Heart right ventricle (tissue), 16 donors: ENCODE measurements at regions of chr11 and their contacts with region 1.

Region 1: GRCh38 chr11:64269380-64270234 is 14.9 kb downstream of the BAD start:
- DNase-seq: peak; percentile 97 to 99
- ATAC-seq: peak; percentile 86 to 92 (median 90)
- H3K4me3 ChIP-seq: peak overlapping the region; percentile 70 to 90 (median 79)
- H3K27ac ChIP-seq: peak overlapping the region; percentile 89 to 100 (median 98)
- H3K4me1 ChIP-seq: peaks cover 18 to 55% (median 36%) of the 10 kb centered on the region in 9 donors
- H3K27me3 ChIP-seq: no peaks in the 10 kb centered on the region
- CTCF ChIP-seq: peak in 5 of 9 donors; percentile 4 to 56 (median 39)

Region 2: DNA sequence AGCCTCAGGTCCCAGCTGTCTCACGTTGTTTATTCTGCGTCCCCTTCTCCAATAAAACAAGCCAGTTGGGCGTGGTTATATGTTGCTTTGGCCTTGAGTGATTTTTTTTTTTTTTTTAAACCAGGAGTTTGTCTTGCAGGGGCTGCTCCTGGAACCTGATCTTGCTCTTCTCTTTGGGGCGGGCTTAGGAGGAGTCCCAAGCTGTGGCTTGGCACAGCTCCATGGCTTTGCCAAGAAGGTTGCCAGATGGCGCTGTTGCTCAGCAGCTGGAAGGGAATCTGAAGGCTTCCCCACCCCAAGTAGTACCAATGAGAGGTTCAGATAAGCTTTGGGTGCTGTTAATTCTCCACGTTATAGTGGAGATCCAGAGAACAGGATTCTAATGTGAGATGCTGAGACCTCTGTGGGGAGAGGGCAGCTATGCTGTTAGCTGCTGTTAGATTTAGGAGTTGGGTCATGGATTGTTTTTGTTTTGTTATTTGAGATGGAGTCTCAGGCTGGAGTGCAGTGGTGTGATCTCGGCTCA is 65.1 kb before region 1 on chr11:
- intact Hi-C with region 1: loop called in 1 of 10 experiments (anchors 1 kb)
- DNase-seq: peak; percentile 82 to 85
- ATAC-seq: peak; percentile 46 to 75 (median 64)
- H3K4me3 ChIP-seq: no peak overlapping the region
- H3K27ac ChIP-seq: peak overlapping the region in 7 of 10 donors; percentile 1 to 99 (median 28)
- H3K4me1 ChIP-seq: peaks cover 7 to 55% (median 39%) of the 10 kb centered on the region in 9 donors
- H3K27me3 ChIP-seq: no peaks in the 10 kb centered on the region
- CTCF ChIP-seq: peak; percentile 39 to 83 (median 73)

Region 3: GRCh38 chr11:64246871-64247728 is 22.5 kb before region 1 on chr11 and contains the start of gene PPP1R14B:
- intact Hi-C with region 1: loop called in 5 of 10 experiments (anchors 1 to 2 kb)
- DNase-seq: peak; percentile 90 to 92
- ATAC-seq: peak; percentile 65 to 81 (median 76)
- H3K4me3 ChIP-seq: peak within 1 kb of the TSS; percentile 44 to 90 (median 71)
- H3K27ac ChIP-seq: peak within 1 kb of the TSS; percentile 66 to 96 (median 92)
- H3K4me1 ChIP-seq: peaks cover 14 to 57% (median 48%) of the 10 kb centered on the region in 9 donors
- H3K27me3 ChIP-seq: no peaks in the 10 kb centered on the region
- CTCF ChIP-seq: peak in 5 of 9 donors; percentile 8 to 34 (median 24)
- total RNA-seq, gene PPP1R14B: 52.4 to 194 (median 77.2) TPM

Region 4: GRCh38 chr11:64284048-64284961 is 14.7 kb after region 1 on chr11 and contains the start of gene BAD:
- intact Hi-C with region 1: loop called in 5 of 10 experiments (anchors 1 to 2 kb)
- DNase-seq: peak; percentile 95 to 96
- ATAC-seq: peak; percentile 90 to 96 (median 94)
- H3K4me3 ChIP-seq: peak within 1 kb of the TSS; percentile 39 to 91 (median 74)
- H3K27ac ChIP-seq: peak within 1 kb of the TSS; percentile 84 to 99 (median 95)
- H3K4me1 ChIP-seq: peaks cover 14 to 49% (median 31%) of the 10 kb centered on the region in 9 donors
- H3K27me3 ChIP-seq: no peaks in the 10 kb centered on the region
- CTCF ChIP-seq: no peak
- total RNA-seq, gene BAD: 40.7 to 106 (median 52.2) TPM

Region 5: GRCh38 chr11:64304316-64305072 is 34.9 kb after region 1 on chr11:
- intact Hi-C with region 1: loop called in 3 of 10 experiments (anchors 1 to 2 kb)
- DNase-seq: peak; percentile 93 to 94
- ATAC-seq: peak; percentile 26 to 77 (median 60)
- H3K4me3 ChIP-seq: peak overlapping the region; percentile 36 to 93 (median 75)
- H3K27ac ChIP-seq: peak overlapping the region; percentile 90 to 98 (median 96)
- H3K4me1 ChIP-seq: peaks cover 18 to 55% (median 44%) of the 10 kb centered on the region in 9 donors
- H3K27me3 ChIP-seq: peaks cover 0 to 25% (median 20%) of the 10 kb centered on the region in 7 donors
- CTCF ChIP-seq: peak; percentile 84 to 96 (median 91)